ENCODE measurements at regions of chr1 and their contacts with region 1.

Region 1: GRCh38 chr1:1307908-1308755 is at the starts of genes ACAP3 and PUSL1:
- DNase-seq: peak; percentile 86
- H3K4me3 Mint-ChIP-seq: peak within 1 kb of the TSS; percentile 88
- H3K27ac Mint-ChIP-seq: peak within 1 kb of the TSS; percentile 86
- H3K4me1 Mint-ChIP-seq: peaks cover 15% of the 10 kb centered on the region
- H3K27me3 Mint-ChIP-seq: no peaks in the 10 kb centered on the region
- total RNA-seq, gene ACAP3: 47.7 and 55.1 TPM in 2 replicates
- total RNA-seq, gene PUSL1: 34.6 and 36.8 TPM in 2 replicates

Region 2: DNA sequence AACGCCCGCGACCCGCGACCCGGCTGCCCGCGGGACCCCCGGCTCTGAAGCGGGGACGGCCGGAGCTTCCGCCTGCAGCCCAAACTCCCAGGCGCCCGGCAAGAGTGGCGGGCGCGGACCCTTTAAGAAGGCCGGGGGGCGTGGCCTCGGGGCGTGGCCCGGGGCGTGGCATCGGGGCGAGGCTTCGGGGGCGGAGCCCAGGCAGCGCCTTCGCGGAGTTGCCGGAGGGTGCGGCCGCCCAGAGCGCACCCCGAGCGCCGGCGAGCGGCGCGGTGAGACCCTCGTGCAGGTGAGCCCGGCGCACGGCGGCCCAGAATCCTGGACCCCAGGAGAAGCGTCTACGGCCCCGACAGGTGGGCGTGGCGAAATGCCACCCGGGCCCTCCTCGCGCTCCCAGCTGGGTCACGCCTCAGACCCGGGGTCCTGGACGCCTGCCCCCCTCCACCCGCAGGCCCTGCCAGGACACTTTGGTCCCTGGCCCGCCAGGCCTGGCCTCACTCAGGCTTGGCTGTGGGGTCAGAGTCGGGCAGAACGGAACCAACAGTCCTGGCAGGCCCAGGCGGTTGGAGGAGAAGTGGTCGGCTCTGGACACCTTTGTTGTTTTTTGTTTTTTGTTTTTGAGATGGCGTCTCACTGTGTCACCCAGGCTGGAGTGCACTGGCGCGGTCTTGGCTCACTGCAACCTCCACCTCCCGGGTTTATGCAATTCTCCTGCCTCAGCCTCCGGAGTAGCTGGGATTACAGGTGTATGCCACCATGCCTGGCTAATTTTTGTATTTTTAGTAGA is 248.4 kb before region 1 on chr1:
- intact Hi-C with region 1: loop called (anchors 5 kb)
- DNase-seq: peak; percentile 85
- H3K4me3 Mint-ChIP-seq: peak overlapping the region; percentile 86
- H3K27ac Mint-ChIP-seq: no peak overlapping the region
- H3K4me1 Mint-ChIP-seq: no peaks in the 10 kb centered on the region
- H3K27me3 Mint-ChIP-seq: peaks cover 25% of the 10 kb centered on the region

Region 3: DNA sequence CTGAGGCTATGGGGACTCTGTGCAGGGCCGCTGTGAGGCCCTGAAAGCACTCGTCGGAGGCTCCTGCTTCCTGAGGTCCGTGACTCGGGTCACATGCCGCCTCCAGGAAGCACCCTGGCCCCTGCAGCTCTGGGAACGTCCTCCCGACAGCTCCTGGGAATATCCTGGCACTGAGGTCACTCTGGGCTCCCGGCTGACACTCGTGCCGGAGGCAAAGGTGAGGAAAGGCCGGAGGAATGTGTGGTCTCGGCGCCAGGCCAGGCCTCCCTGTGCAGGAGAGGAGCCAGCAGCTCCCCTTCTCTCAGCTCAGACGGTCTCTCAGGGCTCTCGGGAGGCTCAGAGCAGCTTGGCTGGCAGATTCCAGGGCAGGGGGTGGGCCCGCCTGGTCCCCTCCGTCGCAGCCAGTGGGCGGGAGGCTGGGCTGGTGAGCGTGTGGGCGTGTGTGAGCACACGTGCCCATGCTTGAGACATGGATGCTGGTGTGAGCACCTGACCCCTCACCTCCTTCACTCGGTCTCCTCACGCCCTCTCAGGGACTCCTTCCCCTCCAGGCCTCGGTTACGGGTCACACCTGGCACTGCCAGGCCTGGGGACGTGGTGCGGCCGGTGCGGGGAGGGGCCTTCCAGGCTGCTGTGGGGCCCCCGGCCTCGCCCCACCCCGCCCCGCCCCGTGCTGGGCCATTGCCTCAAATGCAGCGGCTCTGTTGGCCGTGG is 228.6 kb before region 1 on chr1:
- intact Hi-C with region 1: no loop called
- DNase-seq: no peak
- H3K4me3 Mint-ChIP-seq: no peak overlapping the region
- H3K27ac Mint-ChIP-seq: no peak overlapping the region
- H3K4me1 Mint-ChIP-seq: no peaks in the 10 kb centered on the region
- H3K27me3 Mint-ChIP-seq: no peaks in the 10 kb centered on the region

Region 4: GRCh38 chr1:1273512-1274298 is 34.4 kb before region 1 on chr1 and contains the start of gene UBE2J2:
- intact Hi-C with region 1: loop called (anchors 5 kb)
- DNase-seq: peak; percentile 86
- H3K4me3 Mint-ChIP-seq: peak within 1 kb of the TSS; percentile 90
- H3K27ac Mint-ChIP-seq: peak within 1 kb of the TSS; percentile 63
- H3K4me1 Mint-ChIP-seq: peaks cover 40% of the 10 kb centered on the region
- H3K27me3 Mint-ChIP-seq: no peaks in the 10 kb centered on the region
- total RNA-seq, gene UBE2J2: 95.6 and 99.5 TPM in 2 replicates

Region 5: DNA sequence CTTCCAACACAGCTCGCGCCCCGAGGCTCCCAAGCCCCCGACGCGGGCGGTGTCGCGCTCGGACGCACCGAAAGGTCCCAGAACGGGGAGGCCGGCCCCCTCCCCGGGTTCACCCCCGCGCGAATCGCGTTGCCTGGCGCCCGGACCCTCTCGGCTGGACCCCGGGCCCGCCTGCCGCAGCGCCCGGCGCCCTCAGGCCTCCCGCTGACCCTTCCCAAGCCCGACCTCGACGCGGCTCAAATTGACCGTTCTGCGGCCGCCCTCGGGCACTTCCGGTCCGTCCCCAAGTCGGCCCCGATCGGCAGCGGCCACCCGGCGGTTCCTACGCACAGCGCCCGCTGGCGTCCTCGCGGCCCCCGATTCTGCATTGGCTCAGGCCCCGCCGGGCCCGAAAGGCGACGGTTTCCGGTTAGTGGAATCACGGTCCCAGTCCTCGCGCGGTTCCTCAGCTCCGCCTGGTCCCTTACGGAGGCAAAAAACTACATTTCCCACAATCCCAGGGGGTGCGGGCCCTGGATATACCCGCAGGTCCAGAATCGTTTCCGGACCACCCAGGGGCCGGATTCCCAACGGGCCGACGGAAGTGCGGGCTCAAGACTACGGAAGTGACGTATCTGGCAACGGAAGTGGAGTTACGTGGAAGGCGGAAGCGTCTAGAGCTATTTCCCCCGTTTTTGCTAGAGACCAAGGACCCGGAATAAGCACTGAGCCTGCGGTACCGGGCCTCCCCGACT is 67.0 kb after region 1 on chr1 and contains the start of gene AURKAIP1:
- intact Hi-C with region 1: loop called (anchors 1 kb)
- DNase-seq: peak; percentile 97
- H3K4me3 Mint-ChIP-seq: peak within 1 kb of the TSS; percentile 93
- H3K27ac Mint-ChIP-seq: peak within 1 kb of the TSS; percentile 98
- H3K4me1 Mint-ChIP-seq: peaks cover 11% of the 10 kb centered on the region
- H3K27me3 Mint-ChIP-seq: peaks cover 2% of the 10 kb centered on the region
- total RNA-seq, gene AURKAIP1: 147 and 148 TPM in 2 replicates

Region 6: GRCh38 chr1:1511533-1512285 is 203.6 kb after region 1 on chr1 and contains the start of gene ATAD3A:
- intact Hi-C with region 1: loop called (anchors 5 kb)
- DNase-seq: peak; percentile 95
- H3K4me3 Mint-ChIP-seq: peak within 1 kb of the TSS; percentile 97
- H3K27ac Mint-ChIP-seq: peak within 1 kb of the TSS; percentile 92
- H3K4me1 Mint-ChIP-seq: peaks cover 7% of the 10 kb centered on the region
- H3K27me3 Mint-ChIP-seq: no peaks in the 10 kb centered on the region
- total RNA-seq, gene ATAD3A: 108 TPM in 2 replicates